Mammary epithelial cell (primary cell): ENCODE measurements at regions of chr11 and their contacts with region 1.

Region 1: DNA sequence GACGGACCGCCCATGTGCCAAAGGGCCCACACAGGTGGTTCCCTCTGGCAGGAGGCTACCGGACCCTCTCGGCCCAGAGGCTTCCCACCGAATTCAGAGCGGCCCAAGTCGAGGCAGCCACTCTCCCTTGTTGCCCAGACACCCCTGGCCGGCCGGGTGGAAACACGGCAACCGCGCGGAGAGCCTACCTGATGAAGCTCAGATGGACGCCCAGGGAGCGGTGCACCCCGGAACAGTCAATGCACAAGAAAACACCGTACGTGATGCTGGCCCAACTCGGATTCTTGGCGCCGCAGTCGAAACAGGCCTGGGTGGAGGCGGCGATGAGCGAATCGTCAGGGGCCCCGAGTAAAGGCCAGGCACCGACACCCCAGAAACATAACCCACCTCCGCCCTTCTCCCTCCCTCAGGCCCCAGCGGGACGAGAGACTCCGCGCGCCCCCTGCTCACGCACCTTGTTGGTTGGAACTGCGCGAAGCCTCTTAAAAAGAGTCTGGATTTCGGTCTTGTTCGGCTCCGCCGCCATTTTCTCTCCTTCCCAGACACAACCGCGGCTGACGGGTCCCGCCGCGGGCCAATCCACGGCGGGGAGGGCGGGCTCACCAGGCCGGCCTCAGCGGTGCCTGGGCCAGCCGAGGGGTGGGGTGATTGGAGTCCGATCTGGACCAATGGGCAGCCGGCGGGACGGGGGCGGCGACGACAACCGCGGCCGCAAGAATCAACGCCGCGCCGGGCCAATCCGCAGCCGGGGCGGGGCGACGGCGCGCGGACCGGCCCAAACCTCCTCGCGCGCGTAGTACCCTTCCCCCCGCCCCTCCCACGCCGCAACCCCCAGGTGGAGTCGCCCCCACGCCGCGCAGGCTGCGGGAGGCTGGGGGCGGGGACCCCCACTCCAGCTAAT is at the start of gene ARFGAP2:
- DNase-seq: peak; percentile 96
- H3K4me3 ChIP-seq: peak within 1 kb of the TSS; percentile 77 to 89 (median 87)
- H3K27ac ChIP-seq: peak within 1 kb of the TSS; percentile 84
- H3K4me1 ChIP-seq: peaks cover 18% of the 10 kb centered on the region
- H3K27me3 ChIP-seq: no peaks in the 10 kb centered on the region
- CTCF ChIP-seq: no peak
- total RNA-seq, gene ARFGAP2: 83.0 to 120 TPM

Region 2: GRCh38 chr11:47104261-47104950 is 72.2 kb before region 1 on chr11:
- CTCF ChIA-PET with region 1: no interaction called
- dilution Hi-C with region 1: no loop called
- in situ Hi-C with region 1: no loop called
- intact Hi-C with region 1: no loop called
- DNase-seq: no peak
- H3K4me3 ChIP-seq: no peak overlapping the region
- H3K27ac ChIP-seq: no peak overlapping the region
- H3K4me1 ChIP-seq: no peaks in the 10 kb centered on the region
- H3K27me3 ChIP-seq: no peaks in the 10 kb centered on the region
- CTCF ChIP-seq: no peak

Region 3: GRCh38 chr11:47213985-47214564 is 37.5 kb after region 1 on chr11:
- CTCF ChIA-PET with region 1: interaction called, 7 read pairs
- dilution Hi-C with region 1: no loop called
- in situ Hi-C with region 1: no loop called
- intact Hi-C with region 1: loop called (anchors 1 kb)
- DNase-seq: peak; percentile 89
- H3K4me3 ChIP-seq: peak overlapping the region; percentile 8 to 47 (median 38)
- H3K27ac ChIP-seq: peak overlapping the region; percentile 73
- H3K4me1 ChIP-seq: peaks cover 16% of the 10 kb centered on the region
- H3K27me3 ChIP-seq: no peaks in the 10 kb centered on the region
- CTCF ChIP-seq: no peak

Region 4: DNA sequence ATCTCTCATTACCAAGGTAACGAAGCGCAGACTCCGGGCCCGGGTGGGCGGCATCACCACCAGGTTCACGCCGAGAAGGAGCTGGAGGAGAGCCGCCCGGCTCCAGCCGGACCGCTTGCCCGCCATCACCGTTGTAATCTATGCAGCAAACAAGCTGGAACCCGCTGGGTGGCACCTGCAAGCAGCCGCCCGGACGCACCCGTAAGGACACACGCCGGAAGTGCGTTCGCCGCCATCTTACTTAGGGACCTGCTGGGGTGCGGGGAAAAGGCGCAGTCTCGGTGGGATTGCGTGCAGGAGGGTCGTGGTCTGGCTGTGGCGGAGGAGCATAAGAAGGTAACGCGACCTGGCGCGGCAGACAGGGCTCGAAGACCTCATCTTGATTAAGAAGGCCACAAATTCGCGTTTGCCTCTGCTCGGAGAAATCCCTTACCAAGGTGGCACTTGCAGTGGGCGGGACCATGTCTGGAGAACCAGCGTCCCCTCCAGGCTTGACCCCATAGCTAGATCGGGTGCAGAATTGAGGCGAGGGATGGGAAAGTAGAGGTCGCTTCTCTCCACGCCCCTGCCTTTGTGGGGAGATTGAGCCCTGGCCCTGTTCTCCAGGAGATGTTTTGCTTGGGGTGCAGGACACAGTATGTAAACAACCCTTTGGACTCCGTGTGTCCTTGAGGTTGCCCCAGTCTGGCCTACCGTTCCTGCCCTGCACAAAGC is 72.2 kb after region 1 on chr11 and contains the start of gene ACP2:
- CTCF ChIA-PET with region 1: no interaction called
- dilution Hi-C with region 1: no loop called
- in situ Hi-C with region 1: no loop called
- intact Hi-C with region 1: loop called (anchors 1 kb)
- DNase-seq: peak; percentile 81
- H3K4me3 ChIP-seq: peak within 1 kb of the TSS; percentile 79 to 88 (median 80)
- H3K27ac ChIP-seq: peak within 1 kb of the TSS; percentile 64
- H3K4me1 ChIP-seq: peaks cover 9% of the 10 kb centered on the region
- H3K27me3 ChIP-seq: no peaks in the 10 kb centered on the region
- CTCF ChIP-seq: peak in 1 of 2 donors; percentile 31
- total RNA-seq, gene ACP2: 24.0 to 34.2 TPM

Region 5: DNA sequence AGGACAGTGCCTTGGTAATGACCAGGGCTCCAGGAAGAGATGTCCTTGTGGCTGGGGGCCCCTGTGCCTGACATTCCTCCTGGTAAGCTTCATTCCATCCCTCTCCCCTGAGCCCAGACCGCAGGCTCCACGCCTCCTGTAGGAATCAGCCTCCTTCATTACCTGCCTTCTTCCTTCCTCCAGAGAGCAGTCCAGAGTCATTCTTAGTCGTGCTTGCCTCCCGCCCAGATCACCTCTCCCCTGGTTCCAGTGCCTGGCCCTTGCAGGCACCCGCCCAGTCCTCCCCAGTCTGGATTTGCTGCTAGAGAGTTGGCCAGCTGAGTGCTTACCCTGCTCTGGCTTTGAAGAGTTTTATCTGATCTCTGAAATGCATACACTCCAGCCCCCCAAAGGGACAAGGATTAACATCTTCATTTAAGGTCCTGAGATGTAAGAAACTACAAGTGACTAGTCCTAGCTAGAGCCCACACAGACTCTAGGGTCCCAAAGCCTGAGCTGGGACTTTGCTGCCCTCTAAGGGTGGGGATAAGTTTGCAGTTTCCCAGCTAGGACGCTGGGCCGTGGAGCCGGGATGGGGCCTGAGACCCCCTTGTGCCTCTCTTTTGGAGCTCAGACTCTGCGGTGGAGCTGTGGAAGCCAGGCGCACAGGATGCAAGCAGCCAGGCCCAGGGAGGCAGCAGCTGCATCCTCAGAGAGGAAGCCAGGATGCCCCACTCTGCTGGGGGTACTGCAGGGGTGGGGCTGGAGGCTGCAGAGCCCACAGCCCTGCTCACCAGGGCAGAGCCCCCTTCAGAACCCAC is 82.8 kb after region 1 on chr11:
- CTCF ChIA-PET with region 1: no interaction called
- dilution Hi-C with region 1: loop called (anchors 5 kb)
- in situ Hi-C with region 1: no loop called
- intact Hi-C with region 1: loop called (anchors 1 kb)
- DNase-seq: no peak
- H3K4me3 ChIP-seq: no peak overlapping the region
- H3K27ac ChIP-seq: no peak overlapping the region
- H3K4me1 ChIP-seq: peaks cover 11% of the 10 kb centered on the region
- H3K27me3 ChIP-seq: no peaks in the 10 kb centered on the region
- CTCF ChIP-seq: peak; percentile 48 to 70

Region 6: GRCh38 chr11:47407746-47408590 is 231.4 kb after region 1 on chr11 and contains the start of gene SLC39A13:
- CTCF ChIA-PET with region 1: no interaction called
- dilution Hi-C with region 1: no loop called
- in situ Hi-C with region 1: no loop called
- intact Hi-C with region 1: loop called (anchors 5 kb)
- DNase-seq: peak; percentile 96
- H3K4me3 ChIP-seq: peak within 1 kb of the TSS; percentile 68 to 79 (median 70)
- H3K27ac ChIP-seq: peak within 1 kb of the TSS; percentile 88
- H3K4me1 ChIP-seq: peaks cover 30% of the 10 kb centered on the region
- H3K27me3 ChIP-seq: no peaks in the 10 kb centered on the region
- CTCF ChIP-seq: peak; percentile 61 to 72
- total RNA-seq, gene SLC39A13: 55.5 to 97.2 TPM